ENCODE measurements at regions of chr18 and their contacts with region 1.

Region 1: DNA sequence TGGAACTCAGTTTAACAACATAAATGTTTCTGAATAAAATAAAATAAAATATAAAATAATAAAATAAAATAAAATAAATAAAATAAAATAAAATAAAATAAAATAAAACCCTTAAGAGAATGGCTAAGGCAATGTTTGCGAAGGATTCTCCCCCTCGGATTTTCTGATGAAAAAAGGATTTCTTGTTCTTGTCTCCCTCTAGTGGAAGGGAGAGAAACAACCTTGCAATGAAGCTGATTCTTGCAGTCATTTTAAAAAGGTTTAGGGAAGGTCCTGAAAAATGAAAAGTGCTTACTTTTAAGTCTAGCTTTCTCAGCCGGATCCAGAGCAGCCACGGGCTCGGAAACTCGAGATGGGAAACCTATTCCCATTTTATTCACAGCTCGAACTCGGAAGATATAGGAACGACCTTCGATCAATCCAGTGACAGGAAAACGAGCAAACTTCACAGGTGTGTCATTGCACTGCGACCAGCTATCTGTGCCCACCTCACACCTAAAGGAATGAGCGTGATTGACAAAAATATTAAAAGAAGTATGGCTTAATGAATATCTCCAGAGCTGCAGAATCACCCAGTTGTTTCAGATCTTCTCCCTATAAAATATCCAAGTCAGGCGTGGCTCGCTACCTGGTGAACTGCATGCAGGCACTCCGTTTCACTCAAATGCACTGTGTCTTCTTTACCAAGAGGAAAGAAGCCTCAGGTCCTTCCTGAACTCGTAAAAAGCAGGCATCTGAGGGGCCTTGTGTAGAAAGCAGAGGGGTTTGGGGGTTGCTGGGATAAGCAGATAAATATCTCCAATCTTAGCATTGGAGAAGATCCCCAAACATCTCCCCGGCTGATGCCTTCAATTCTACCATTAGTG is 68.1 kb downstream of the MYOM1 start:
- DNase-seq: no peak
- ATAC-seq: no peak
- H3K4me3 Mint-ChIP-seq: no peak overlapping the region
- H3K27ac Mint-ChIP-seq: no peak overlapping the region
- H3K4me1 Mint-ChIP-seq: peaks cover 2% of the 10 kb centered on the region
- H3K27me3 Mint-ChIP-seq: no peaks in the 10 kb centered on the region
- CTCF ChIP-seq: peak; percentile 82

Region 2: DNA sequence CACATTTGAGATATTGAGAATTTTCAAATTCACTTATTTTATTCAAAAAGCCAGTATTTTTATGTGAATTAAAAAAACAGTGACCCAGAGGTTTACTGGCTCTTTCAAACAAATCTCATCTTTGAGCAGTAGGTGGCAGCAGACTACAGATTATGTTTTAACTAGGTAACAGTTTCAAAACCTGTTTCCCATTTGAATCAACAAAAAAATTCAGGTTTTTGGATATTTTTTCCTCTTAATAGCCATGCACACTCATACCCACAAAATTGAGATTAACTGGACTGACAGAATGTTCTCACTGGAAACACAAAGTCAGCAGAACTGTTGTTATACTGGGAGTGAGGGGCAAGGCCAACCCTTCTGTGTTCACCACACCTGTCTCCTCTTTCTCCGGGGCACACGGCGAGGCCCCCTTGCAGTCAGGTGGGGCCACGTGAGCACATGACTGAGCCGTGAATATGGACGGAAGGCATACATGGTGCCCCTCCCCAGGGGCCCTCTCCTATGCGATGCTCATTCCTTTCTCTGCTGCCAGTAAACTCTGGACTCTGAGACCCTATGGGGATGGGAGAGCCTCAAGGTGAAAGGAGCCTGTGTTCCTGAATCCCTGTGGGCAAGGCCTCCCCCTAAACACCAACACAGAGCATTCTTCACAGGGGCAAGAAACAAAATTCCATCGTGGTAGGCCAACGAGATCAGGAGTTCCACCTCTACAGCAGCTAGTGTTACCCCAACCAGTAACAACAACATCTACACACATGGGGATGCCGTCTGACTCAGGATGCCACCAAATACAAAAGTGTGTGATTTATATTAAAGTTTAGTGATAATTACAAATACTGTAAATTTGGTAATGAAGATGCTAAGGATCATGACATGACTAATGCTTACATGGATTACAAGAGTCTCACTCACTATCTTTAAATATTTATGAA is 219.1 kb before region 1 on chr18:
- CTCF ChIA-PET with region 1: interaction called, 14 read pairs
- POLR2A ChIA-PET with region 1: no interaction called
- intact Hi-C with region 1: loop called (anchors 10 kb)
- DNase-seq: peak; percentile 56
- ATAC-seq: peak; percentile 71
- H3K4me3 Mint-ChIP-seq: no peak overlapping the region
- H3K27ac Mint-ChIP-seq: peak overlapping the region; percentile 79
- H3K4me1 Mint-ChIP-seq: peaks cover 43% of the 10 kb centered on the region
- H3K27me3 Mint-ChIP-seq: no peaks in the 10 kb centered on the region
- CTCF ChIP-seq: peak; percentile 88

Region 3: GRCh38 chr18:3104190-3105054 is 47.2 kb before region 1 on chr18:
- CTCF ChIA-PET with region 1: interaction called, 12 read pairs
- POLR2A ChIA-PET with region 1: no interaction called
- intact Hi-C with region 1: no loop called
- DNase-seq: no peak
- ATAC-seq: no peak
- H3K4me3 Mint-ChIP-seq: no peak overlapping the region
- H3K27ac Mint-ChIP-seq: no peak overlapping the region
- H3K4me1 Mint-ChIP-seq: no peaks in the 10 kb centered on the region
- H3K27me3 Mint-ChIP-seq: no peaks in the 10 kb centered on the region
- CTCF ChIP-seq: no peak

Region 4: GRCh38 chr18:3177902-3178687 is 26.5 kb after region 1 on chr18:
- CTCF ChIA-PET with region 1: interaction called, 22 read pairs
- POLR2A ChIA-PET with region 1: no interaction called
- intact Hi-C with region 1: no loop called
- DNase-seq: peak; percentile 9
- ATAC-seq: peak; percentile 53
- H3K4me3 Mint-ChIP-seq: no peak overlapping the region
- H3K27ac Mint-ChIP-seq: no peak overlapping the region
- H3K4me1 Mint-ChIP-seq: peaks cover 2% of the 10 kb centered on the region
- H3K27me3 Mint-ChIP-seq: no peaks in the 10 kb centered on the region
- CTCF ChIP-seq: no peak

Region 5: DNA sequence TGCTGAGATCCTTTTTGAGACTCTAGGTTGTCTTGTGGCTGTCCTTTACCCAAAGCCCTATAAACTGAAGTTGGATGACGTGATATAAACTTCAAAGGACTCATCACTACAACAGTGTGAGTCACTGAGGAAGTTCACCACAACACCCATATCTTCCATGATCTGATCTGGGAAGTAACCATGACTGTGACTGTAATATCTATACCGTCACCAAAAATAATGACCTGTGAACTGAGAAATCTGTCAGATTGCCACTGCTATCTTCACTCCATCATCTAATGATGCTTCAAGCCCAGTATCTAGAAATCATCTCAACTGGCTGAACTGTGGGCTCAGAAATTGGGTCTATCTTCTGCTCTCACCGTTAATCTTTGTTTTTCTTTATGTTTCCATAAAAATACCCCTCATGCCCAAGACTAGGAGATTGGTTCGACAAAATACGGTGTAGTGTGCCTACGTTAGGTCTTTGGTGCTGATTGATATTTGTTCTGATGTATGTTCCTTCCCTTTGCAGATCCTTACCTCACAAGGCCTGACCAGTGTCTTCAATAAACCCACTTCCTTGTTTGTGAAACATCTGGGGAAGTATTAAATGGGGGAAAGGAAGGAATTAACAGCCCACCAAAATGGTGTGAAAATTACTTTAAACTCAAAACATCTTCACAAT is 188.5 kb after region 1 on chr18:
- CTCF ChIA-PET with region 1: no interaction called
- POLR2A ChIA-PET with region 1: no interaction called
- intact Hi-C with region 1: no loop called
- DNase-seq: no peak
- ATAC-seq: peak; percentile 58
- H3K4me3 Mint-ChIP-seq: no peak overlapping the region
- H3K27ac Mint-ChIP-seq: no peak overlapping the region
- H3K4me1 Mint-ChIP-seq: peaks cover 9% of the 10 kb centered on the region
- H3K27me3 Mint-ChIP-seq: no peaks in the 10 kb centered on the region
- CTCF ChIP-seq: no peak

Region 6: DNA sequence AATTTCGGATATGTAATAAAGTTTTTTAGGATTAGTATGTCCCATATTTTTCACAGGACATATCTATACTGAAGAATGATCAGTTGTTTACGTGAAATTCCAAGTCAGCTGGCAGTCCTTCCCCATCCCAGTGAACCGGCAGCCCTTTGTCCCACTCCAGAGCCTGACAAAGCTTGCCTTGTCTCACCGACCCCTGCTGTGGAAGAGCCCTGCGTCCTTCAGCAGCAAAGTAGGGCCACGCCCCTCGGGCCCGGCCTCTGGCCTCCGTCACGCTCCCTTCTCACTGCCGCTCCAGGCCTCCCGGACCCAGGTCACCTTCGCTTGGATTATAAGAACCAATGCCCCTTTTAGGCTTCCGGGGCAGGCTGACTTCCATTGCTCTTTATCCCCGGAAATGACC is 208.6 kb after region 1 on chr18:
- CTCF ChIA-PET with region 1: no interaction called
- POLR2A ChIA-PET with region 1: no interaction called
- intact Hi-C with region 1: no loop called
- DNase-seq: no peak
- ATAC-seq: no peak
- H3K4me3 Mint-ChIP-seq: no peak overlapping the region
- H3K27ac Mint-ChIP-seq: no peak overlapping the region
- H3K4me1 Mint-ChIP-seq: peaks cover 15% of the 10 kb centered on the region
- H3K27me3 Mint-ChIP-seq: no peaks in the 10 kb centered on the region
- CTCF ChIP-seq: no peak